B cell (primary cell): ENCODE measurements at regions of chr11 and their contacts with region 1.

Region 1: DNA sequence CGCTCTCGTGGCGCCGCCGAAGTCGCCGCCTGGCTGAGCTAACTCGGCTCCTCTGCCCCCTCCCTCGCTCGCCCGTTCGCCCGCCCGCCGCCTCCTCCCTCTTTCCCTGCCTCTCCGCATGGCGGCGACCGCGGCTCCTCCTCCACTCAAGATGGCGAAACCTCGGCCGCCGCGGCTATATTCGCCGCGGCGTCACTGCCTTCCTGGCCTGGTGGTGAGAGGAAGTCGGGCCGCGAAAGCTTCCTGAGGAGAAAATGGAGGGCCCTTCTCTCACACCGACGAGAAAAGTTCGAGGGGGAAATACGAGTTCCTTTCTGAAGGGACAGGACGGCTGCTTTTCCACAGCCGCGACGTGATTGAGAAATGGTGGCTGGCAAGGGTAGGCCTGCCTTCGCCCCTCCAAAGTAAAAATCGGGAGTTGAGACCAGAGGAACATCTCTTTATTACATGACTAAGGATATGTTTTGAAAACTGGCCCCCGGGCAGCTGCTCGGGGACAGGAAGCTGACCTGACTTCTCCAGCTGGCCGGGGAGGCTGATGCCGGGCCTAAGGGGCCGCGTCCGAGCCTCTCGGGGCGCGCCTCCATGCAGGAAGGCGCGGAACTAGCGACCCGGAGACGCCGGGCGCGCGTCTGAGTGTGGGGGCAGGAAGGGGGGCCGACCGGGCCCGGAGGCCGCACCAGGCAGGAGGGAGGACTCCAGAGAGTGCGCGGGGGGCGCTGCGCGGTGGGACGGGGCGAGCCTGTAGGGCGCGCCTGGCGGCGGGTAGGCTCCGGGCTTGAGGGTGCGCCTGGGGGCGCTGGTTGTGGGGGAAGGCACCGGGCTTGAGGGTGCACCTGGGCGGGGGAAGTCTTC is at the start of gene DDX6:
- DNase-seq: peak; percentile 93
- ATAC-seq: peak; percentile 59
- H3K4me3 ChIP-seq: peak within 1 kb of the TSS; percentile 74 to 97 (median 94)
- H3K4me3 Mint-ChIP-seq: peak within 1 kb of the TSS; percentile 100
- H3K27ac ChIP-seq: peak within 1 kb of the TSS; percentile 98 to 100
- H3K27ac Mint-ChIP-seq: peak within 1 kb of the TSS; percentile 100
- H3K4me1 ChIP-seq: peaks cover 35 to 47% of the 10 kb centered on the region in 2 donors
- H3K4me1 Mint-ChIP-seq: peaks cover 32% of the 10 kb centered on the region
- H3K27me3 ChIP-seq: no peaks in the 10 kb centered on the region
- H3K27me3 Mint-ChIP-seq: no peaks in the 10 kb centered on the region
- CTCF ChIP-seq: no peak
- total RNA-seq, gene DDX6: 255 and 256 TPM in 2 replicates

Region 2: DNA sequence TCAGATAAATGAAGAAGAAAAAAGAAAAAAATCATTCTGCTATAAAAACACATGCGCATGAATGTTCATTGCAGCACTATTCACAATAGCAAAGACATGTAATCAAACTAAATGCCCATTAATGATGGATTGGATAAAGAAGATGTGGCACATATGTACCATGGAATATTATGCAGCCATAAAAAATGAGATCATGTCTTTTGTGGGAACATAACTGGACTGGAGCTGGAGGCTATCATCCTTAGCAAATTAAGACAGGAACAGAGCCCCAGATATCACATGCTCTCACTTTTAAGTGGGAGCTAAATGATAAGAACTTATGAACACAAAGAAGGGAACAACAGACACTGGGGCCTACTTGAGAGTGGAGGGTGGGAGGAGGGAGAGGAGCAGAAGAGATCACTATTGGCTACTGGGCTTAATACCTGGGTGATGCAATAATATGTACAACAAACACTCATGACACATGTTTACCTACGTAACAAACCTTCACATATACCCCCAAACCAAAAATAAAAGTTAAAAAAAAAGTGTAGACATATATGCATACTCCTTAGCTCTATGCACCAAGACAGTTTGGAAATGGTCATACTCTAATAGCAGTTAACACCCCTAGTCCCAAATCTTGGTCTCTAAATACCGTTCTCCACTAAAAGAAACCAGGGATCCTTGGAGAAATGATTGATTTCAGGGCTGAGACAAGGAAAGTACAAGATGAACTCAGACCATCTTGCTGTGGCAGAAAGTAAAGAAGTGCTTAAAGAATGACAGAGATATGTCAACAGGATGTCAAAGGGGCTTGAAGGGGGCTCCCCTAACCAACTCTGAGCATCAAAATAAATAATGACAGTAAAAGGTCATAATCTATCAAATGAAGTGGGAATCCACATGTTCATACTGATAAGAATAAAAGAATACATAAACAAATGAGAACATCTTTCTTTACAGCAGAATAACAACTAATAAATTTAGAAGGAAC is 16.8 kb after region 1 on chr11:
- CTCF ChIA-PET with region 1: interaction called, 22 read pairs
- POLR2A ChIA-PET with region 1: interaction called, 7 read pairs
- intact Hi-C with region 1: no loop called
- DNase-seq: no peak
- ATAC-seq: peak; percentile 57
- H3K4me3 ChIP-seq: no peak overlapping the region
- H3K4me3 Mint-ChIP-seq: peak overlapping the region; percentile 75
- H3K27ac ChIP-seq: peak overlapping the region; percentile 5 to 61
- H3K27ac Mint-ChIP-seq: peak overlapping the region; percentile 91
- H3K4me1 ChIP-seq: peaks cover 47 to 49% of the 10 kb centered on the region in 2 donors
- H3K4me1 Mint-ChIP-seq: peaks cover 70% of the 10 kb centered on the region
- H3K27me3 ChIP-seq: no peaks in the 10 kb centered on the region
- H3K27me3 Mint-ChIP-seq: no peaks in the 10 kb centered on the region
- CTCF ChIP-seq: no peak

Region 3: GRCh38 chr11:118870396-118871345 is 79.3 kb after region 1 on chr11:
- CTCF ChIA-PET with region 1: interaction called, 109 read pairs
- POLR2A ChIA-PET with region 1: interaction called, 97 read pairs
- intact Hi-C with region 1: loop called (anchors 1 kb)
- DNase-seq: peak; percentile 86
- ATAC-seq: peak; percentile 61
- H3K4me3 ChIP-seq: peak overlapping the region; percentile 15 to 66 (median 48)
- H3K4me3 Mint-ChIP-seq: peak overlapping the region; percentile 90
- H3K27ac ChIP-seq: peak overlapping the region; percentile 93 to 99
- H3K27ac Mint-ChIP-seq: peak overlapping the region; percentile 99
- H3K4me1 ChIP-seq: peaks cover 61 to 72% of the 10 kb centered on the region in 2 donors
- H3K4me1 Mint-ChIP-seq: peaks cover 60% of the 10 kb centered on the region
- H3K27me3 ChIP-seq: no peaks in the 10 kb centered on the region
- H3K27me3 Mint-ChIP-seq: no peaks in the 10 kb centered on the region
- CTCF ChIP-seq: no peak

Region 4: DNA sequence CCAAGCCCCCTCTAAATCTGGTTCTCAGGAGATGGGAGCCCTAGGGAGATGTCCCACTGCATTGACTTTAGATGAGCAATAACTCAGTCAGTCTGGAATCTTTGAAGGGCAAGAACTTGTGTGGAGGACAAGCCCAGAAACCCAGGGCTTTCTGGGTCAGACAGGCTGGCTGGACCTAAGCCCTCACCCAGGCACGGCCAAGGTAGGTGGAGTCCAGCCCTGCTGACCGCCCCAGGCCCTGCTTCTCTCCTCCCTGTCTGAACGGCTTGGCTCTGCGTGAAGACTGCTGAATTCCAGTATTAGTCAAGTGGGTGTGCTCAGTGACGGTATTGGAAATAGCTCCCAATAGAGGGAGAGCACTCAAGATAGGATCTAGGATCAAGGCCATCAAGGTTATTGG is 98.4 kb after region 1 on chr11:
- CTCF ChIA-PET with region 1: interaction called, 85 read pairs
- POLR2A ChIA-PET with region 1: interaction called, 74 read pairs
- intact Hi-C with region 1: no loop called
- DNase-seq: peak; percentile 25
- ATAC-seq: no peak
- H3K4me3 ChIP-seq: peak overlapping the region in 2 of 5 experiments; percentile 97 to 99
- H3K4me3 Mint-ChIP-seq: peak overlapping the region; percentile 97
- H3K27ac ChIP-seq: peak overlapping the region; percentile 91 to 99
- H3K27ac Mint-ChIP-seq: peak overlapping the region; percentile 90
- H3K4me1 ChIP-seq: peaks cover 84 to 100% of the 10 kb centered on the region in 2 donors
- H3K4me1 Mint-ChIP-seq: peaks cover 93% of the 10 kb centered on the region
- H3K27me3 ChIP-seq: no peaks in the 10 kb centered on the region
- H3K27me3 Mint-ChIP-seq: no peaks in the 10 kb centered on the region
- CTCF ChIP-seq: no peak

Region 5: DNA sequence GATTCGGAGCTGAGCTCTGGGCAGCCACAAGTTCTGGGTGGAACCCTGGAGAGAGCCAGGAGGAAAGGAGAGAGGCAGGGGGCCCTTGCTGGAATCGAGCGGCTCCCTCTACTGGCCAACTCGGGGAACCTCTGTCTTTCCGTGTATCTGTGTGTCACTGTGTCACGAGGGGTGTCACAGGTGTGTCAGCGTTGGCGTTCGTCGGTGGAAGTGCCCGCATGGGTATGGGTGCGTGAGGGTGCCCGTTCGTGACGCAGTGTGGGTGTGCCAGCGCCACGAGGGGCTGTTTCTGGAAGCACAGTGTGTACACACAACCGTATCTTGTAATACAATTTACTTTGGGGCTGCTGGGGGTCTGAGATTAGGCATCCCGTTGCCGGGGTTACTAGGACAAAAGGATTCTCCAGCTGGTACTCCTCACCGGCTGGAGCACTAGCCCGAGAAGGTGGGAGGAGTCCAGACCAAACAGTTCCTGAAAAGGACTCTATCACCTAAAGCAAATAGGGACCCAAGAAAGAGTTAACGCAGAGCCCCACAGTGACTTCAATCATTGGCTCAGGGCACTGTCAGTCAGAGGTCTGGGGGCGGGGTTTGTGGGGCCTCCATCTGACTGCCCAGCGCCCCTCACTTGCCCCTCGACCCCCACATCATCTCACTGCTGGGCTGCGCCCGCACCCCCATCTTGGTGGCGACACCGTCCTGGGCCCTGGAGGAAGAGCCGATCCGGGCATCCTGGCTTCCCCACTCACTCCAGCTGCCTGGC is 137.0 kb after region 1 on chr11:
- CTCF ChIA-PET with region 1: interaction called, 17 read pairs
- POLR2A ChIA-PET with region 1: interaction called, 25 read pairs
- intact Hi-C with region 1: loop called (anchors 1 kb)
- DNase-seq: peak; percentile 99
- ATAC-seq: peak; percentile 56
- H3K4me3 ChIP-seq: peak overlapping the region; percentile 32 to 86 (median 66)
- H3K4me3 Mint-ChIP-seq: peak overlapping the region; percentile 99
- H3K27ac ChIP-seq: peak overlapping the region; percentile 96 to 99
- H3K27ac Mint-ChIP-seq: peak overlapping the region; percentile 98
- H3K4me1 ChIP-seq: peaks cover 40 to 58% of the 10 kb centered on the region in 2 donors
- H3K4me1 Mint-ChIP-seq: peaks cover 63% of the 10 kb centered on the region
- H3K27me3 ChIP-seq: no peaks in the 10 kb centered on the region
- H3K27me3 Mint-ChIP-seq: no peaks in the 10 kb centered on the region
- CTCF ChIP-seq: peak; percentile 87

Region 6: DNA sequence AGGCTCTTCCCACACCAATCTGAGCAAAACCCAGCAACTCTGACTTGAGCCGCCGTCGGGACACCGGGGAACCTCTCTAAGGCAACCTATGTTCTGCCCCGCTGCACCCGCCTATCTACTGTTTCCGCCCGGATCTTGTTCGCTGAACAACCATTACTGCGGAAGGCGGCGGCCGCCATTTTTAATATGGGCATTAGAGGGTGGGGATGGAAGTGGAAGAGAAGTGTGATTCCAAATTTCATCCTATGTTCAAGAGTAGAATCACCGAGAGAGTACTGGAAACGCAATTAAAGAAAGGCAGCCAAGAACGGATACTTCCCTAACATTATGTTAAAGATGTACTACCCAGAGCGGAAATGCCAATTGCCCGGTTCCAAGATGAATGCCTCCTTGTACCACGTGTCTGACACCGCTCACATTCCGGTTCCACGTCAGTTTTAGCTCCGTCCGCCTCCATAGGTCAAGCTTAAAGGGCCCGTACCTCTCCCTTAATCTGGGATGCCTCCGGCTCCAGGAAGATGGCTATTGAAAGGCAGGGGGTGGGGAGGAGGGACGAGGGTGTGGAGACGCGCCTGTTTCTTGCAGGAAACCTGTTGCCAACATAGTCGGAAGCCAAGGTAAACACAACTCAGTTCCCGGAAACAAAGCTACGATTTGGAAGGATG is 310.6 kb after region 1 on chr11 and contains the start of gene DPAGT1:
- CTCF ChIA-PET with region 1: no interaction called
- POLR2A ChIA-PET with region 1: no interaction called
- intact Hi-C with region 1: no loop called
- DNase-seq: peak; percentile 93
- ATAC-seq: peak; percentile 84
- H3K4me3 ChIP-seq: peak within 1 kb of the TSS; percentile 75 to 100 (median 89)
- H3K4me3 Mint-ChIP-seq: peak within 1 kb of the TSS; percentile 93
- H3K27ac ChIP-seq: peak within 1 kb of the TSS; percentile 88 to 91
- H3K27ac Mint-ChIP-seq: peak within 1 kb of the TSS; percentile 98
- H3K4me1 ChIP-seq: peaks cover 33 to 46% of the 10 kb centered on the region in 2 donors
- H3K4me1 Mint-ChIP-seq: peaks cover 61% of the 10 kb centered on the region
- H3K27me3 ChIP-seq: no peaks in the 10 kb centered on the region
- H3K27me3 Mint-ChIP-seq: no peaks in the 10 kb centered on the region
- CTCF ChIP-seq: no peak
- total RNA-seq, gene DPAGT1: 34.5 and 38.3 TPM in 2 replicates